ENCODE measurements at regions of chr19 and their contacts with region 1.

Region 1: GRCh38 chr19:10352764-10353671 is 13.6 kb upstream of the ICAM3 start:
- DNase-seq: no peak
- H3K4me3 ChIP-seq: no peak overlapping the region
- H3K27ac ChIP-seq: no peak overlapping the region
- H3K4me1 ChIP-seq: no peaks in the 10 kb centered on the region
- H3K27me3 ChIP-seq: no peaks in the 10 kb centered on the region
- CTCF ChIP-seq: no peak

Region 2: GRCh38 chr19:10238172-10238783 is 114.7 kb before region 1 on chr19:
- CTCF ChIA-PET with region 1: interaction called, 14 read pairs
- POLR2A ChIA-PET with region 1: no interaction called
- intact Hi-C with region 1: no loop called
- DNase-seq: peak in 1 of 2 experiments; percentile 46
- H3K4me3 ChIP-seq: no peak overlapping the region
- H3K27ac ChIP-seq: no peak overlapping the region
- H3K4me1 ChIP-seq: peaks cover 18% of the 10 kb centered on the region; the same call in 1 of the 2 replicates
- H3K27me3 ChIP-seq: no peaks in the 10 kb centered on the region
- CTCF ChIP-seq: no peak

Region 3: GRCh38 chr19:10384580-10384979 is 31.6 kb after region 1 on chr19:
- CTCF ChIA-PET with region 1: no interaction called
- POLR2A ChIA-PET with region 1: no interaction called
- intact Hi-C with region 1: no loop called
- DNase-seq: no peak
- H3K4me3 ChIP-seq: no peak overlapping the region
- H3K27ac ChIP-seq: no peak overlapping the region
- H3K4me1 ChIP-seq: peaks cover 3% of the 10 kb centered on the region
- H3K27me3 ChIP-seq: no peaks in the 10 kb centered on the region
- CTCF ChIP-seq: no peak